CD8-positive, alpha-beta T cell (primary cell): ENCODE measurements at regions of chr10 and their contacts with region 1.

Region 1: GRCh38 chr10:32346134-32346550 is 816 bp downstream of the EPC1 start:
- DNase-seq: peak; percentile 91 to 98 (median 94)
- ATAC-seq: peak; percentile 81
- H3K4me3 ChIP-seq: peak overlapping the region; percentile 82 to 90
- H3K4me3 Mint-ChIP-seq: peak overlapping the region; percentile 97
- H3K27ac ChIP-seq: peak overlapping the region; percentile 98
- H3K27ac Mint-ChIP-seq: peak overlapping the region; percentile 100
- H3K4me1 ChIP-seq: peaks cover 47% of the 10 kb centered on the region
- H3K4me1 Mint-ChIP-seq: peaks cover 69% of the 10 kb centered on the region
- H3K27me3 ChIP-seq: no peaks in the 10 kb centered on the region
- H3K27me3 Mint-ChIP-seq: no peaks in the 10 kb centered on the region
- CTCF ChIP-seq: peak; percentile 83

Region 2: DNA sequence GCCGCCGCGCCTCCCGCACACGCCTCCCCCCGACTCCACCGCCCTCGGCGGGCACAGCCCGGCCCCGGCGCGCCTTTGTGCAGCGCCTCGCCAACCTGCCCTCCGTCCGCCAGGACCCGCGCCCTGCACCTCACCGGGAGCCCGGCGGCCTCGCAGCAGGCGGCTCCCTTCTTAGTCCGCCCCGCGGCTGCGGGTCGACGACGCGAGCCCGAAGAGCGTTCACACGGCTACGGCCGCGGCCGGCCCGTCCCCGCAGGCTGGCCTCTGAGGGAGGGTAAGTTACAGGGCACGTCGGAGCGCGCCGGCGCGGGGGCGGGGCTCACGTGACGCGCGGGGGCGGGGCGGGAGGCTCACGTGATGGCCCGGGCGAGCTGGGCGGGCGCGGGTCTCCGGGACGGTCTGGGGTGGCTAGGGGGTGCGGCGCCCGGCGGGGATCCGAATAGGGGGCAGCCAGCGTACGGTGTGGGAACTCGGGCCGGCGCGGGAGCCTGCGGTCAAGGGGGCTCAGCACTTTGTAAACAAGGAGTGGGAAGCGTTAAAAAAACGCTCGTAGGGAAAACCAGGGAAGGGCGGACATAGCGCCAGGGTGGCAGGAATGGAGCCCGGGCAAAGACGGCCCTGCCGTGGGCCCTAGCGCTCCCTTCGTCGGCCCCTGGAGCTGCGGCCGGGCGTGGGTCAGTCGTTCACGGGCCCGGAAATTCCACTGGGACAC is 417.4 kb before region 1 on chr10 and contains the start of gene ARHGAP12:
- CTCF ChIA-PET with region 1: no interaction called
- POLR2A ChIA-PET with region 1: no interaction called
- intact Hi-C with region 1: loop called (anchors 5 to 10 kb)
- DNase-seq: peak; percentile 70 to 92 (median 84)
- ATAC-seq: peak; percentile 67
- H3K4me3 ChIP-seq: peak within 1 kb of the TSS; percentile 90 to 95
- H3K4me3 Mint-ChIP-seq: peak within 1 kb of the TSS; percentile 94
- H3K27ac ChIP-seq: peak within 1 kb of the TSS; percentile 65 to 87
- H3K27ac Mint-ChIP-seq: peak within 1 kb of the TSS; percentile 83
- H3K4me1 ChIP-seq: peaks cover 41% of the 10 kb centered on the region
- H3K4me1 Mint-ChIP-seq: peaks cover 49% of the 10 kb centered on the region
- H3K27me3 ChIP-seq: no peaks in the 10 kb centered on the region
- H3K27me3 Mint-ChIP-seq: no peaks in the 10 kb centered on the region
- CTCF ChIP-seq: no peak
- total RNA-seq, gene ARHGAP12: 15.7 to 15.9 TPM

Region 3: DNA sequence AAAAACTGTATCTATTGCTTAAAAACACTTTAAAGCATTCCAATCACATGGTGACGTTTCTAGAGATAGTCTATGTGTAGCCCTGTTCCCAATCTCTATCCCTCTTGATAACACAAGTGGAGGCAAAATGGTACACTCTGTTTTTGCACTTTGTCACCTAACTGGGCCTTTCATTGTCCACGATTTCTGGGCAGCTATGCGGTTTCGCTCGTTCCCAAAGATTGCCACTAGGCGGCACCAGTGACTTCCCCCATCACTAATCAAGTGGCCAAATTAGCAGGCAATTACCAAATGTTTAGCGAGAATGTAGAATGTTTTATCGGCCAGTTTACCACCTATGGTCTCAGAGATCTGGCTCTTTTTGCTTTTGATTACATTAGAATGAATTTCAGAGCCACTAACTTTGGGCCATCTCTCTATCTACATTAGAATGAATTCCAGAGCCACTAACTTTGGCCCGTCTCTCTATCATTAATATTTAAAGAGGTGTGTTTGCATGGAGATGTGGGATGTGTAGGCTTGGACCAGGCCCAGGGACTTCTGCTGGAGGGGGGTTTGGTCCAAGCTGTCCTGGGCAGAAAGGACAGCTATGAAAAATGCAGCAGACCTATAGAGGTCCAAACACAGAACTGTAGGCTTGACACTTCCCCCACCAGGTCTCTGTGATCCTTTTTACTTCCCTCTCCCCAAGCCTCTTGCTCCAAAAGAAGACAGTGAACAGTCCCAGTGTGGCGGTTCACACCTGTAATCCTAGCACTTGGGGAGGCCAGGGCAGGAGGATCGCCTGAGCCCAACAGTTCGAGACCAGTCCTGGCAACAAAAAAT is 89.3 kb before region 1 on chr10:
- CTCF ChIA-PET with region 1: interaction called, 11 read pairs
- POLR2A ChIA-PET with region 1: interaction called, 3 read pairs
- intact Hi-C with region 1: loop called (anchors 1 kb)
- DNase-seq: peak; percentile 43 to 81 (median 67)
- ATAC-seq: peak; percentile 73
- H3K4me3 ChIP-seq: no peak overlapping the region
- H3K4me3 Mint-ChIP-seq: no peak overlapping the region
- H3K27ac ChIP-seq: no peak overlapping the region
- H3K27ac Mint-ChIP-seq: no peak overlapping the region
- H3K4me1 ChIP-seq: no peaks in the 10 kb centered on the region
- H3K4me1 Mint-ChIP-seq: peaks cover 5% of the 10 kb centered on the region
- H3K27me3 ChIP-seq: no peaks in the 10 kb centered on the region
- H3K27me3 Mint-ChIP-seq: no peaks in the 10 kb centered on the region
- CTCF ChIP-seq: peak; percentile 89

Region 4: GRCh38 chr10:32332299-32332750 is 13.8 kb before region 1 on chr10:
- CTCF ChIA-PET with region 1: interaction called, 11 read pairs
- POLR2A ChIA-PET with region 1: interaction called, 6 read pairs
- intact Hi-C with region 1: loop called (anchors 1 kb)
- DNase-seq: peak; percentile 32 to 92 (median 69)
- ATAC-seq: peak; percentile 96
- H3K4me3 ChIP-seq: no peak overlapping the region
- H3K4me3 Mint-ChIP-seq: peak overlapping the region; percentile 73
- H3K27ac ChIP-seq: peak overlapping the region; percentile 12 to 55
- H3K27ac Mint-ChIP-seq: peak overlapping the region; percentile 90
- H3K4me1 ChIP-seq: peaks cover 91% of the 10 kb centered on the region
- H3K4me1 Mint-ChIP-seq: peaks cover 94% of the 10 kb centered on the region
- H3K27me3 ChIP-seq: no peaks in the 10 kb centered on the region
- H3K27me3 Mint-ChIP-seq: no peaks in the 10 kb centered on the region
- CTCF ChIP-seq: no peak

Region 5: DNA sequence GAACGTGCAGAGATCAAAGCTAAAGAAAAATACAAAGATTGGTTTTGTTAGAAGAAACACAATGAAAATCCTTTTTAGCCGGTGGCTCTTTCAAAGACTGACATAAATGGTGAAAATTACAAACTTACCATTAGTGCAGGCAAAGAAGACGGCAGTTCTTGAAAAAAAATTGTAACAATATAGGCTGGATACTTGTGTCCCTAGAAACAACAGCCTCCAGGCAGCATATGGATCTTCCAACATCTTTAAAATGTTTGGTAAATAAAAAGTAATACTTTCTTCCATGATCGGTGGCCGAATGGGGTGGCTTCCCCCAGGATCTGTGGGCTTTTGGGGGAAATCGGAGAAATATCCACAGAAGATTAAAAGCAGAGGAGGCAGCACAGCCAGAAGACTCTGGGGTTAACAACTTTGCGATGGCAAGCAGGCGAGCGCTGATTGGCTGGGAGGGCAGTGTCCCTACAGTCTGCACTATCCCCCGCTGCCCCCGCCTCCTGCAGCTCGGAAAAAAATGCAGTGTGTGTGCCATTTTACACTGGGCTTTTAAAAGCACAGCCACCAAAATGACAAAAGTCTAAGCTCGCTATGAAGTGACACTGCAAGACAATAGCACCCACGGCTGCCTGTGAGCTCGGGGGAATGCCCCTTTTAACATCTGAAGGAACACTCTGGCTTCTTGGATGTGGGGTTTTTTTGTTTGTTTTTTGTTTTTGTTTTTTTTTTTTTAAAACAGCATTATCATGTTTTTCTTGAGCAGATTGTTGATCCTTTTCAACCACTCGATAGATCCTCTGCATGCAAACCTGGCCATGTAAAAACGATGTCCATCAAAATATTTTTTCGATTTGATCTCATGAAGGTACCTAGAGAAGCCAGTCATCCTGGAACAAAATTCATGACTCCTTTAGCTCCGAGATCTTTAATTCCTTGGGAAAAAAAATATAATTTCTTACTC is 32.5 kb after region 1 on chr10:
- CTCF ChIA-PET with region 1: no interaction called
- POLR2A ChIA-PET with region 1: interaction called, 41 read pairs
- intact Hi-C with region 1: loop called (anchors 1 kb)
- DNase-seq: peak; percentile 86 to 96 (median 93)
- ATAC-seq: peak; percentile 88
- H3K4me3 ChIP-seq: peak overlapping the region; percentile 72 to 84
- H3K4me3 Mint-ChIP-seq: no peak overlapping the region
- H3K27ac ChIP-seq: peak overlapping the region; percentile 68 to 72
- H3K27ac Mint-ChIP-seq: no peak overlapping the region
- H3K4me1 ChIP-seq: peaks cover 19% of the 10 kb centered on the region
- H3K4me1 Mint-ChIP-seq: peaks cover 26% of the 10 kb centered on the region
- H3K27me3 ChIP-seq: no peaks in the 10 kb centered on the region
- H3K27me3 Mint-ChIP-seq: no peaks in the 10 kb centered on the region
- CTCF ChIP-seq: no peak

Region 6: GRCh38 chr10:32437334-32437733 is 91.2 kb after region 1 on chr10:
- CTCF ChIA-PET with region 1: no interaction called
- POLR2A ChIA-PET with region 1: no interaction called
- intact Hi-C with region 1: no loop called
- DNase-seq: no peak
- ATAC-seq: no peak
- H3K4me3 ChIP-seq: no peak overlapping the region
- H3K4me3 Mint-ChIP-seq: no peak overlapping the region
- H3K27ac ChIP-seq: no peak overlapping the region
- H3K27ac Mint-ChIP-seq: no peak overlapping the region
- H3K4me1 ChIP-seq: no peaks in the 10 kb centered on the region
- H3K4me1 Mint-ChIP-seq: peaks cover 15% of the 10 kb centered on the region
- H3K27me3 ChIP-seq: no peaks in the 10 kb centered on the region
- H3K27me3 Mint-ChIP-seq: peaks cover 4% of the 10 kb centered on the region
- CTCF ChIP-seq: no peak

Region 7: GRCh38 chr10:33143160-33143728 is 797.1 kb after region 1 on chr10:
- CTCF ChIA-PET with region 1: no interaction called
- POLR2A ChIA-PET with region 1: no interaction called
- intact Hi-C with region 1: loop called in 1 of 2 experiments (anchors 1 kb)
- DNase-seq: peak in 6 of 9 experiments; percentile 21 to 65 (median 42)
- ATAC-seq: peak; percentile 9
- H3K4me3 ChIP-seq: no peak overlapping the region
- H3K4me3 Mint-ChIP-seq: no peak overlapping the region
- H3K27ac ChIP-seq: no peak overlapping the region
- H3K27ac Mint-ChIP-seq: peak overlapping the region; percentile 55
- H3K4me1 ChIP-seq: peaks cover 33% of the 10 kb centered on the region
- H3K4me1 Mint-ChIP-seq: peaks cover 49% of the 10 kb centered on the region
- H3K27me3 ChIP-seq: no peaks in the 10 kb centered on the region
- H3K27me3 Mint-ChIP-seq: no peaks in the 10 kb centered on the region
- CTCF ChIP-seq: no peak